ENCODE measurements at regions of chr1 and their contacts with region 1.

Region 1: DNA sequence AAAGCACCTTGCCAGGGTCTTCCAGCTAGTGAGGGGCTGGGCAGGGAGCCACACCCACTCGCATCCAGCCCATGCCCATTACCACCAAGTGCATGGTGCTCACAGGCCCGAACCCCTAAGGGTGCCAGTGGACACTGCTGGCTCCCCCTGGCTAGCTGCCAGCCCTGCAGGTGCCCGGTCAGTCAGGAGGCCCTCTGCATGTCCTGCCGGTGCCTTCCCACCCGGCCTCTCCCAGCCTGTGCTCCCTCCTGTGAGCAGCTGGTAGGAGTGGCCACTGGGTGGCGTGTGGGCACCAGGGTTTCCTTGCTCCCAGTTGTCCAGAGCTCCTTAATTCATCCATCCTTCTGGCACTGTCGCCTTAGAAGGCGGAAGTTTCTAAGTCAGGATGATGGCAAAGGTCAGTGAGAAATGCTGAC is 33.4 kb downstream of the QSOX1 start:
- DNase-seq: peak; percentile 41
- ATAC-seq: peak; percentile 93
- H3K4me3 ChIP-seq: no peak overlapping the region
- H3K27ac ChIP-seq: no peak overlapping the region
- H3K4me1 ChIP-seq: no peaks in the 10 kb centered on the region
- H3K27me3 ChIP-seq: no peaks in the 10 kb centered on the region
- CTCF ChIP-seq: peak; percentile 96
- EP300 ChIP-seq: no peak
- POLR2A ChIP-seq: no peak
- RAD21 ChIP-seq: peak; percentile 82

Region 2: GRCh38 chr1:180213401-180214170 is 25.5 kb after region 1 on chr1:
- CTCF ChIA-PET with region 1: no interaction called
- POLR2A ChIA-PET with region 1: no interaction called
- in situ Hi-C with region 1: no loop called
- intact Hi-C with region 1: no loop called
- DNase-seq: no peak
- ATAC-seq: no peak
- H3K4me3 ChIP-seq: no peak overlapping the region
- H3K27ac ChIP-seq: no peak overlapping the region
- H3K4me1 ChIP-seq: no peaks in the 10 kb centered on the region
- H3K27me3 ChIP-seq: peaks cover 3 to 26% of the 10 kb centered on the region in 2 experiments; a peak in 2 of 5 replicates
- CTCF ChIP-seq: no peak
- EP300 ChIP-seq: no peak
- POLR2A ChIP-seq: no peak
- RAD21 ChIP-seq: no peak

Region 3: GRCh38 chr1:180252638-180253536 is 64.8 kb after region 1 on chr1:
- CTCF ChIA-PET with region 1: interaction called, 3 read pairs
- POLR2A ChIA-PET with region 1: no interaction called
- in situ Hi-C with region 1: no loop called
- intact Hi-C with region 1: loop called (anchors 10 kb)
- DNase-seq: peak; percentile 51
- ATAC-seq: peak; percentile 25; the same call in 2 of the 3 replicates
- H3K4me3 ChIP-seq: peak overlapping the region; percentile 11 to 65 (median 28); a peak in 3 of 6 replicates
- H3K27ac ChIP-seq: no peak overlapping the region
- H3K4me1 ChIP-seq: peaks cover 76% of the 10 kb centered on the region
- H3K27me3 ChIP-seq: peaks cover 0 to 10% of the 10 kb centered on the region in 2 experiments; a peak in 3 of 5 replicates
- CTCF ChIP-seq: peak; percentile 83
- EP300 ChIP-seq: no peak
- POLR2A ChIP-seq: no peak
- RAD21 ChIP-seq: peak; percentile 74; the same call in 1 of the 2 replicates

Region 4: GRCh38 chr1:180269761-180270527 is 81.8 kb after region 1 on chr1:
- CTCF ChIA-PET with region 1: no interaction called
- POLR2A ChIA-PET with region 1: no interaction called
- in situ Hi-C with region 1: loop called (anchors 10 kb)
- intact Hi-C with region 1: no loop called
- DNase-seq: peak; percentile 69
- ATAC-seq: peak; percentile 90
- H3K4me3 ChIP-seq: peak overlapping the region in 1 of 3 experiments; percentile 8; a peak in 1 of 6 replicates
- H3K27ac ChIP-seq: no peak overlapping the region
- H3K4me1 ChIP-seq: peaks cover 36% of the 10 kb centered on the region
- H3K27me3 ChIP-seq: 0 out of 5 replicates have a peak, but pooled peaks cover 0 to under 1% of the 10 kb centered on the region in 2 experiments
- CTCF ChIP-seq: peak; percentile 67
- EP300 ChIP-seq: no peak
- POLR2A ChIP-seq: no peak
- RAD21 ChIP-seq: no peak

Region 5: GRCh38 chr1:180415985-180416633 is 228.0 kb after region 1 on chr1:
- CTCF ChIA-PET with region 1: interaction called, 24 read pairs
- POLR2A ChIA-PET with region 1: no interaction called
- in situ Hi-C with region 1: loop called (anchors 5 kb)
- intact Hi-C with region 1: loop called (anchors 1 kb)
- DNase-seq: peak; percentile 28
- ATAC-seq: peak; percentile 47; the same call in 2 of the 3 replicates
- H3K4me3 ChIP-seq: no peak overlapping the region
- H3K27ac ChIP-seq: no peak overlapping the region
- H3K4me1 ChIP-seq: no peaks in the 10 kb centered on the region
- H3K27me3 ChIP-seq: no peaks in the 10 kb centered on the region
- CTCF ChIP-seq: peak; percentile 73
- EP300 ChIP-seq: no peak
- POLR2A ChIP-seq: no peak
- RAD21 ChIP-seq: peak; percentile 37; the same call in 1 of the 2 replicates

Region 6: GRCh38 chr1:180482425-180483275 is 294.6 kb after region 1 on chr1:
- CTCF ChIA-PET with region 1: interaction called, 9 read pairs
- POLR2A ChIA-PET with region 1: no interaction called
- in situ Hi-C with region 1: loop called (anchors 5 kb)
- intact Hi-C with region 1: loop called (anchors 1 kb)
- DNase-seq: peak; percentile 51
- ATAC-seq: no peak
- H3K4me3 ChIP-seq: no peak overlapping the region
- H3K27ac ChIP-seq: no peak overlapping the region
- H3K4me1 ChIP-seq: 0 out of 2 replicates have a peak, but pooled peaks cover 5% of the 10 kb centered on the region
- H3K27me3 ChIP-seq: no peaks in the 10 kb centered on the region
- CTCF ChIP-seq: peak; percentile 60
- EP300 ChIP-seq: no peak
- POLR2A ChIP-seq: no peak
- RAD21 ChIP-seq: no peak

Measured in HepG2 (cell line).